Body of pancreas (tissue), 4 donors: ENCODE measurements at regions of chrX and their contacts with region 1.

Region 1: DNA sequence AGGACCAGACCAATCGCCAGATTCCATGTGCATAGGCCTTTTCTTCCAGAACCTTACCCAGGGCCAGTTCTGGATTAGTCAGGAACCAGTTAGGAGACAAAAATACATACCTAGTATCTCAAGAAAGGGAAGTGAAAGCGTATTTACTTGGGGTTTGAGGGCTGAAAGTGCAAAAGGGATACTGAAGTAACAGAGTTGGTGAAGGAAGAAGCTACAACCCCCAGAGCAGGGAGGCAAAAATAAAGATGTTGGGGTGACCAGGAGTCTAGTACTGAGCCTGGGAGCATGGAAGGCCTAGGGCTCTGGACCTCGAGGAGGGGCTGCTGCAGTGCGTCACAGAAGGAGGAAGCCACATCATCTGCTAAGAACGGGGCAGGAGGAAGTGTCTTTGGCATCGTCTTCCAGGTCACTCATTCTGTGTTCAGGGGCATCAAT is 38.3 kb downstream of the TKTL1 start:
- DNase-seq: no peak
- ATAC-seq: no peak
- H3K4me3 ChIP-seq: no peak overlapping the region
- H3K27ac ChIP-seq: no peak overlapping the region
- H3K4me1 ChIP-seq: no peaks in the 10 kb centered on the region
- H3K27me3 ChIP-seq: no peaks in the 10 kb centered on the region
- CTCF ChIP-seq: no peak
- POLR2A ChIP-seq: no peak

Region 2: DNA sequence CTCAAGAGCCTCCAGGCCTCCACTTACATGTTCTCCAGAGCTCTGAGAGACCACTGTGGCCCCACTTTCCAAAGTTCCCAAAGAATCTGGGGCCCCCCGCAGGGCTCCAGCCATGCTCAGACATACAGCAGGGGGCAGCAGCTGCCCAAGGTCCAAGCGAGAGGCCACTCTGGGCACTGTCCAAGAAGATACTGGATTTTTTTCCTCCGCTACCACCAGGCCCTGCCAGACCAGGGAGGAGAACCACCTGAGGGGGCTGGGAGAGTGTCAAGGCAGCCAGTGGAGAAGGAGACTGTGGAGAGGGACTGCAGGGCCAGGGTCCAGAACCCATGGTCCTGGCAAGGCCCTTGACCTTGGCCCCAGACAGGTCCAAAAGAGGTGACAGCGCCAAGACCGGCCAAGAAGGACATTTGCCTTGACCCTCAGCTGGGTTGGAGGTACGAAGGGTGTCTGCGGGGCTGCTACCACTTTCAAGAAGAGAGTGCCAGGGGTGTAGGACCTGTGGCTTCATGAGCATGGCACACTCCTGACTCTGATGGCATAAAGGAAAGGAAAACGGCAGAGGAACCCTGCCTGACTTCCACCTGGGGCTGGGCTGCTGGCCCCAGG is 50.5 kb after region 1 on chrX:
- intact Hi-C with region 1: loop called (anchors 5 kb)
- DNase-seq: peak in 3 of 4 donors; percentile 28 to 54 (median 31)
- ATAC-seq: no peak
- H3K4me3 ChIP-seq: no peak overlapping the region
- H3K27ac ChIP-seq: no peak overlapping the region
- H3K4me1 ChIP-seq: peaks cover 18% of the 10 kb centered on the region
- H3K27me3 ChIP-seq: no peaks in the 10 kb centered on the region
- CTCF ChIP-seq: peak in 6 of 7 experiments; percentile 10 to 45 (median 19)
- POLR2A ChIP-seq: no peak